ENCODE measurements at regions of chr5 and their contacts with region 1.

Region 1: DNA sequence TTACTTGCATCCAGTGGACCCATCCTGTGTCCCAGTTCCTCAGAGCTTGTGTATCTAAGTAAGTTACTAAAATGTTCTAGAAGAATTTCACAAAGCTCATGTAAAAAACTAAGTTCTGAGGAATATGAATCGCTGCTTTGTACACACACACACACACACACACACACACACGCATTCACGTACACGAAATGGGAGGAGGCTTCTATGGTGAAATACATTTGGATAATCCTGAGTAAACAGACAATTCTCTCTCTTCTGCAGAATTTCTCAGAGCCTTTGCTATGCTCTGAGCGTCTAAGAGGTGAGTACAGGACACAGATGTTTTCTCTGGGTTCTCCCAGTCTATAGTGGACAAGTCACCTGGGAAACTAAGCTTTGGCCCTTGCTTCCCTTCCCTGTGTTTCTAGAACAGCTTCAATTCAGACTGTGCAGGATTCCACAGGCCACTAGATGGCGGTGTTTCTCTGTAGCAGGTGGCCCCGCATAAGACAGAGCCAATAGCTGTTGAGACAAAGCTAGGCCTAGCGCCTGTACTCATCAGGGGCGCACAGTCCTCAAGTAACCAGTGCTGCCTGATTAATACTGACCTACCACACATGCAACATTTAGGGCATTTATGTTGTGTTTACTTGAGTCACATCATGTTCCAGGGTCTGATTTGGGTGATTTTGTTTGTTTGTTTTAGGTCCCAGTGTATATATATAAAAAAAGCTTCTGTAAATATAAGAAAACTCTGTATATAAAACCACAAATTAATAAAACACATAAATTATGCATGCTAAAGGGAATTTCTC is 114.8 kb downstream of the LIFR start:
- DNase-seq: peak; percentile 96
- H3K4me3 ChIP-seq: no peak overlapping the region
- H3K27ac ChIP-seq: no peak overlapping the region
- H3K4me1 ChIP-seq: peaks cover 11% of the 10 kb centered on the region
- H3K27me3 ChIP-seq: no peaks in the 10 kb centered on the region
- CTCF ChIP-seq: peak; percentile 97

Region 2: GRCh38 chr5:38121420-38121819 is 320.2 kb before region 1 on chr5:
- CTCF ChIA-PET with region 1: no interaction called
- POLR2A ChIA-PET with region 1: no interaction called
- intact Hi-C with region 1: no loop called
- DNase-seq: no peak
- H3K4me3 ChIP-seq: no peak overlapping the region
- H3K27ac ChIP-seq: no peak overlapping the region
- H3K4me1 ChIP-seq: no peaks in the 10 kb centered on the region
- H3K27me3 ChIP-seq: no peaks in the 10 kb centered on the region
- CTCF ChIP-seq: no peak

Region 3: DNA sequence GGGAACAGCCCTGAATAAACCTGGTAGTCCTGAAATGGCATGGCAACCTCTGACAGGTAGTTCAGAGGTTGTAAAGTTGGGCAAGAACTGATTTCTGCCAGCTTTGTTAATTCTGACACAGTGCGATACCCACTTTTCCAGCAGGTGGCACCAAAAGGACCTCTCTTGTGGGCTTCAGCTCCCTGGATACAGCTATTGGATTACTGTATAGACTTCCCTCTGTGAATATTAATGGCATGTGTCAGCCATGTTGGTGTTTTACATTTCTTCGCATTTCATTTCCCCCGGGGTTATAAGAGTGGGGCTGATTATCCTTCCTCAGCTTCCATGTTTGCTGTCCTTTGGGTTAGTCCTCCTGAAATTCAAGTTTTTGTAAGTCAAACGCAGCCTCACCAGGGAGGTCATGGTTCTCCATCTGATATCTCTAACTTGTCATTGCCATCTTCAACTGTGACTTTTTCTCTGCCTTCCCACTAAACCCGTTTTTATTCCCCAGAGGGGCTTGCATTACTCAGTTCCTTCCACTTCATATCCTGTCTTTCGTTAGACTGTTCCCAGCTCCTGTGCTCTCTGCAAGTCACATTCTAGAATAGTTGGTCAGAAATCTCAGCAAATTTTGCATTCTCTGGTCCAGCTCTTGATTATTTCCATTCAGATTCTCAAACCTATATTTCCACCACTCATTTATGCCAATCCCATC is 20.8 kb before region 1 on chr5:
- CTCF ChIA-PET with region 1: interaction called, 35 read pairs
- POLR2A ChIA-PET with region 1: interaction called, 3 read pairs
- intact Hi-C with region 1: no loop called
- DNase-seq: peak; percentile 89
- H3K4me3 ChIP-seq: no peak overlapping the region
- H3K27ac ChIP-seq: peak overlapping the region; percentile 1
- H3K4me1 ChIP-seq: peaks cover 13% of the 10 kb centered on the region
- H3K27me3 ChIP-seq: no peaks in the 10 kb centered on the region
- CTCF ChIP-seq: peak; percentile 89

Region 4: GRCh38 chr5:38666668-38667498 is 225.2 kb after region 1 on chr5:
- CTCF ChIA-PET with region 1: interaction called, 9 read pairs
- POLR2A ChIA-PET with region 1: no interaction called
- intact Hi-C with region 1: loop called (anchors 2 kb)
- DNase-seq: peak; percentile 39
- H3K4me3 ChIP-seq: no peak overlapping the region
- H3K27ac ChIP-seq: no peak overlapping the region
- H3K4me1 ChIP-seq: no peaks in the 10 kb centered on the region
- H3K27me3 ChIP-seq: no peaks in the 10 kb centered on the region
- CTCF ChIP-seq: peak; percentile 71

Region 5: DNA sequence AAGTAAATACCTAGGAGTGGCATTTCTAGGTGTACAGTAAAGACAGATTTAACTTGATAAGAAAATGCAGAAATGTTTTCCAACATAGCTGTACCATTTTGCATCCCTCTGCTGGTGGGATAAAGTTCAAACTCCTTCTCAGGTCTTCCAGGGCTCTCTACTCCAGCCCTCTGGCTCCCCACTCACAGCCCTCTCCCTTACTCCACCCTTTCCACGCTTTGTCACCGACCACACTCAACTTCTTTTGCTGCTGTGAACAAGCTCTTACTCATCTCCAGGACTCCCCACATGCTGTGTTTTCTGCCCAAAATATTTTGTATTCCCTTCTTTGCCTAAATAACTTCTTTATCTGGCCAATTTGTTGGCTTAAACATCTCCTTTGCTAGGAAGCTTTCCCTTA is 313.5 kb after region 1 on chr5:
- CTCF ChIA-PET with region 1: interaction called, 26 read pairs
- POLR2A ChIA-PET with region 1: no interaction called
- intact Hi-C with region 1: loop called (anchors 10 kb)
- DNase-seq: peak; percentile 64
- H3K4me3 ChIP-seq: no peak overlapping the region
- H3K27ac ChIP-seq: no peak overlapping the region
- H3K4me1 ChIP-seq: peaks cover 12% of the 10 kb centered on the region
- H3K27me3 ChIP-seq: no peaks in the 10 kb centered on the region
- CTCF ChIP-seq: no peak

Region 6: DNA sequence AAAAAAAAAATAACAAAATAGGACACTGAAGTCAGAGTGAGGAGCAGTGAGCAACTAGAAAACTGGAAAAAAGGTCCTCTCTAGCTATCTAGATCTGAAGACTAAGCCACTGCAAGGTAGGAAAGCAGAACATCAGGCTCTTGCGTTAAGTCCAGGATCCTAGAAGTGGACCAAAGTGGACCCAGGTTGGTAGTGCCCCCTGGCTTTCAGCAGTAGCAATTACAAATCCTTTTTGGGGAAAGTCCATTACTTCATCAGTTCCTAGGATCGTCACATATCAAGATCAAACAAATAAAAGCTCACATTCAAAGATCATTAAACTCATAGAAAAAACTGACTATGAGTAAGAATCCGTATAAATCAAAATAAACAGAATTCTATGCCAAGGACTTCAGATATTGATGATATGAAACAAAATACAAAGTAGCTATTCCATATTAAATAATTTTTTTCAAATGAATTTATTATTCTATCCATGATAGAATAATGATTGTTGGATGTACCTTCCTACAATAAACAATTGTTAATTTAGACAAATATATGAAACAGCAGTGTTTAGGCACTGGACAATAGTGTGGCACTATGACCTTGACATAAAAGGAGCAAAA is 639.1 kb after region 1 on chr5:
- CTCF ChIA-PET with region 1: interaction called, 13 read pairs
- POLR2A ChIA-PET with region 1: no interaction called
- intact Hi-C with region 1: loop called (anchors 10 kb)
- DNase-seq: peak; percentile 67
- H3K4me3 ChIP-seq: no peak overlapping the region
- H3K27ac ChIP-seq: no peak overlapping the region
- H3K4me1 ChIP-seq: peaks cover 5% of the 10 kb centered on the region
- H3K27me3 ChIP-seq: no peaks in the 10 kb centered on the region
- CTCF ChIP-seq: peak; percentile 90

Measured in A673 (cell line).